ENCODE measurements at regions of chr22 and their contacts with region 1.

Region 1: DNA sequence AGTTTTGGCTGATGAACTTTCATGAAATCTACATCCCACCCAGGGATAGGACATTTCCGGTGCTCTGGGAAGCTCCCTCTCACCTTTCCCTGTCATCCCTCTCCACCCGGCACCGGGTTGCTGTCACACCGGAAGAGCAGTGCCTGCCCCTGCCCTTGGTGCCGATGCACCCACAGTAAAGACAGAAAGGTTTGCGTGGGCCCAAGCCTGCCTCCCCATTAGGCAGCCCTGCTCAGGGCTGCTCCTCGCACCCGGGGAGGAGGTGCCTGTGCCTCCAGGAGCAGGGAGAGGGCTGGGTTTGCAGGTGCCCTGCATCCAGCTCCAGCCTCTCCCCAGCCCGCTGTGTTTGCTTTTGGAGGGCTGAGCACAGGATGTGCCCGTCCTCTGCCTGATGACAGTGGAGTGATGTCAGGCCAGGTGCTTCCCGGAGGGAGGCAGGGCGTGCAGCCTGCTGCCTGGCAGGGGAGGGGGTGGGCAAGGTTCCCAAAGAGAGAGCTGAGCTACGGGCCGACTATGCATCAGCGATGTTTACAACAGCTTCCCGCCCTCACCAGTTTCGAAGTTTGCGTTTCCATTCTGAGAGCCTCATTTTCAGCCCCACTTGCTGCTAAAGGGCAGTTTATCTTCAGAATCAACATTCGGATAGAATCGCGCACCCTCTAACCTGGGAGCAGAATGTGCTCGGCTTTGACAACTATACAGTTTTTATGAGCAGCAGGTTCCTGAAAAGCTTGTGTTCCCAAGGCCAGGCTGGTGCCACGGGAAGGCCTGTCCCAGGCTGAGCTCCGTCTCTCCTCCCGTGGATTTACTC is 83.2 kb upstream of the CLDN5 start:
- DNase-seq: peak in 8 of 9 donors; percentile 40 to 85 (median 78)
- ATAC-seq: peak; percentile 93
- H3K4me3 ChIP-seq: no peak overlapping the region
- H3K4me3 Mint-ChIP-seq: peak overlapping the region; percentile 66 to 77 (median 69)
- H3K27ac ChIP-seq: peak overlapping the region; percentile 72
- H3K27ac Mint-ChIP-seq: peak overlapping the region; percentile 89 to 96 (median 94)
- H3K4me1 ChIP-seq: peaks cover 0 to 54% of the 10 kb centered on the region in 2 donors
- H3K4me1 Mint-ChIP-seq: peaks cover 28 to 82% (median 63%) of the 10 kb centered on the region in 7 donors
- H3K27me3 ChIP-seq: no peaks in the 10 kb centered on the region
- H3K27me3 Mint-ChIP-seq: no peaks in the 10 kb centered on the region

Region 2: GRCh38 chr22:19576460-19577421 is 30.7 kb before region 1 on chr22:
- CTCF ChIA-PET with region 1: interaction called, 4 read pairs
- POLR2A ChIA-PET with region 1: no interaction called
- intact Hi-C with region 1: loop called in 1 of 2 experiments (anchors 5 kb)
- DNase-seq: peak in 4 of 9 donors; percentile 6 to 73 (median 12)
- ATAC-seq: peak; percentile 83
- H3K4me3 ChIP-seq: no peak overlapping the region
- H3K4me3 Mint-ChIP-seq: peak overlapping the region in 5 of 10 donors; percentile 2 to 74 (median 31)
- H3K27ac ChIP-seq: no peak overlapping the region
- H3K27ac Mint-ChIP-seq: peak overlapping the region in 8 of 9 donors; percentile 15 to 92 (median 58)
- H3K4me1 ChIP-seq: peaks cover 9 to 37% of the 10 kb centered on the region in 2 donors
- H3K4me1 Mint-ChIP-seq: peaks cover 26 to 45% (median 42%) of the 10 kb centered on the region in 7 donors
- H3K27me3 ChIP-seq: no peaks in the 10 kb centered on the region
- H3K27me3 Mint-ChIP-seq: no peaks in the 10 kb centered on the region